ENCODE measurements at regions of chr14 and their contacts with region 1.

Region 1: DNA sequence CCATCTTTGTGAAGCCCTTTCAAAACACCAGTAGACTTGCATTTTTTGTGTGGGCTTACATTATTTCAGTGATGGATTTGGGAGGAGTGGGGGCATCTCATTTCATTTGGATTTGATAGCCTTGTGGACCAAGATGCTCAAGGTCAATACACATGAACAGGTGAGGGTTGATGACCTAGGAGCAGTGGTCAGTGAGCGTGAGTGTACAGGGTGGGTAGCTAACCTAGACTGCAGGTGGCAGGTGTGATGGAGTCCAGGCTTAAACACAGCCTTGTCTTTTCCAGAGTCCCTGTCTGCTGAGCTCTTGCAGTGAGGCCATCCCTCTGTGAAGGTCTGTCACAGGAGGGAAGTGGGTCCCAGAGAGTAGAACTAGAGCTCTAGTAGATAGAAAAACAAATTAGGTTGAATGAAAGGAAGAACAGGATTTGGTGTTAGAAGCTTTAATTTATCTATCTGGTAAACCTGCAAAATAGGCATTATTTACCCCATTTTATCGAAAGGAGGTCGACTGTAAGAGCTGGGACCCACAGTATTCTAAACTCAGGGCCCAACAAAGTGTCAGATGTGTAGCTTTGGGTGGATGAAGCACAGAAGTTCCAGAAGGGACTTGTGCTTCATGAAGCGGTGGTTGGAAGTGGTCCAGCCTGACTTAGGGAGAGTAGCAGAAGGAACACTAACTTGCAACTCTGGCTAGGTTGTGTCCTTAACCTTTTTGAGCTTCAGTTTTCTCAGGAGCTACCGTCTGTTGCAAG is 18.3 kb downstream of the RPS6KL1 start:
- DNase-seq: no peak
- H3K4me3 ChIP-seq: no peak overlapping the region
- CTCF ChIP-seq: no peak

Region 2: DNA sequence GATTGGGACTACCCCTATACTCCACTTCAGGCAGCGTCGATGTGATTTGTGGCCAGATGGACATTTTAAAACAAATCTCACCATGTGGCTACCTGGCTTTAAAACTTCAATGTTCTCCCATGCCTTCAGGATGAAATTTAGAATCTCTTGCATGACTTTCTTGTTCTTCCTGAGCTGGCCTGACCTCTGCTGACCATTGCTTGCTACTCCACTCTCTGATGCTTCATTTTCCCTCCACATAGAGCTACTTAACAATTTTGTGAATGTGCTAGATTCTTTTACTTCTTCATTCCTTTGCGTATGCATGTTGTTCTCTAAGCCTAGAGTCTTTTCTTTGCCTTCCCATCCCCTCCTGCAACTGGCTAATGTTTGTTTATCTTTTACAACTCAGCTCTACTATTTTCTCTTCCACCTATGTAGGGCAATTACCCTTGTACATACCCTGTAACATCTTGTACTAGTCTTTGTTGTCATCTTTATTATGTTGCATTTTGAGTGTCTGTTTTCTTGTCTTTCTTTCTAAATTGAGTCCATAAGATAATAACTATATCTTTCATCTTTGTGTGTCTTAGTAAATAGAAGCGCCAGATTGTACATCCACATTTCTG is 100.5 kb before region 1 on chr14:
- in situ Hi-C with region 1: no loop called
- DNase-seq: peak; percentile 68
- H3K4me3 ChIP-seq: no peak overlapping the region
- CTCF ChIP-seq: peak; percentile 81

Region 3: GRCh38 chr14:74860906-74861733 is 43.7 kb before region 1 on chr14:
- in situ Hi-C with region 1: loop called (anchors 5 kb)
- DNase-seq: peak; percentile 75
- H3K4me3 ChIP-seq: no peak overlapping the region
- CTCF ChIP-seq: peak; percentile 88

Region 4: DNA sequence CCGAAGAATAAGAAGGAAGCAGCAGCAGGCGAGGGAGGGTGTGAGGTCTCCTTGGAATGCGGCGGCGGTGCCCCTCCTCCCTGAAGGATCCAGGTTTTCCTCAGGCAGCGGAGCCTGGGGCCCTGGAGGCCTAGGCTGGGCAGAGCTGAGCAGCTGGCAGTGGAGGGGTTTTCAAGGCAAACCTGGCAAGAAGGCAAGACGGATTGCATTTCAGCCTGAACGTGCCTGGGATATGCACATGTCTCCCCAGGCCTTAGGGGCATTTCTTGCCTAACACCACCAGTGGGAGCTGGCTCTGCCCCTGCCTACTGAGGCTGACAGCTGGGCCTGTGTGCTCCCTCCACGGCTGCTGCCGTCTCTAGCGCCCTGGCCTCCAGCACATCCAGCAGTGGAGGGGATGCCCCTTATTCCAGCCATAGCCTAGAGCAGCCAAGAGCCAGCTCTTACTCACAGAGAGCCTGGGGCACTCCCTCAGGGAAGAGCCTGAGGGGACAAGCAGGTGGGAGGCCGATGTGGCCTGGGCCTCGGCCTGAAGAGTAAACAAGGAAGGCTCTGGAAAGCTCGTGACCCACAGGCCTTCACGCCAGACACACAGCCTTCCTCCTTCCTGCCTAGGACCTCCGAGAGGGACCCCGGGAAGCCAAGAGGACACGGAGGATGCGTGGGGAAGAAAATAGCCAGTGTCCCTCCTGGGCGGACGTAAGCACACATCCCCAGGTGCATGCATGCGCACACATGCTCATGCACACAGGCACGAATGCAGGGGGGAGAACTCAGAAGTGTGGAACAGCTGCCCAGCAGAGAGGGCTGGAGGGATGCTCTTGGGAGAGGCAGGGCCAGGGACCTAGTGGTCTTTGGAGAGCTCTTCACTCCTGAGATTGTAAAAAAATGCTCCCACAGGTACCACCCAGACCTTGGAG is 74.9 kb after region 1 on chr14:
- in situ Hi-C with region 1: loop called (anchors 5 kb)
- DNase-seq: no peak
- H3K4me3 ChIP-seq: no peak overlapping the region
- CTCF ChIP-seq: peak; percentile 22

Measured in astrocyte of the cerebellum (primary cell).